HepG2 (cell line): ENCODE measurements at regions of chr1 and their contacts with region 1.

Region 1: GRCh38 chr1:209827384-209828262 is at the start of gene UTP25:
- DNase-seq: peak; percentile 91
- ATAC-seq: peak; percentile 94
- H3K4me3 ChIP-seq: peak within 1 kb of the TSS; percentile 70 to 92 (median 82)
- H3K27ac ChIP-seq: peak within 1 kb of the TSS; percentile 37
- H3K4me1 ChIP-seq: peaks cover 34% of the 10 kb centered on the region
- H3K27me3 ChIP-seq: no peaks in the 10 kb centered on the region; a peak in 1 of 5 replicates
- CTCF ChIP-seq: peak; percentile 88
- EP300 ChIP-seq: no peak; a peak in 1 of 4 replicates
- POLR2A ChIP-seq: peak; percentile 62 to 83; a peak in 3 of 4 replicates
- RAD21 ChIP-seq: no peak
- total RNA-seq, gene UTP25: 5.7 and 6.6 TPM in 2 replicates

Region 2: GRCh38 chr1:209784265-209785169 is 43.1 kb before region 1 on chr1 and contains the start of gene C1orf74:
- CTCF ChIA-PET with region 1: no interaction called
- POLR2A ChIA-PET with region 1: interaction called, 3 read pairs
- in situ Hi-C with region 1: no loop called
- intact Hi-C with region 1: loop called (anchors 2 kb)
- DNase-seq: peak; percentile 83
- ATAC-seq: peak; percentile 99
- H3K4me3 ChIP-seq: peak within 1 kb of the TSS; percentile 48 to 67 (median 49); a peak in 5 of 6 replicates
- H3K27ac ChIP-seq: peak within 1 kb of the TSS; percentile 34
- H3K4me1 ChIP-seq: peaks cover 11% of the 10 kb centered on the region
- H3K27me3 ChIP-seq: peaks cover 0 to 3% of the 10 kb centered on the region in 2 experiments; a peak in 1 of 5 replicates
- CTCF ChIP-seq: no peak
- EP300 ChIP-seq: no peak
- POLR2A ChIP-seq: peak; percentile 47 to 83; a peak in 3 of 4 replicates
- RAD21 ChIP-seq: no peak
- total RNA-seq, gene C1orf74: 0.71 and 0.98 TPM in 2 replicates